Ascending aorta (tissue), 2 donors: ENCODE measurements at regions of chr17 and their contacts with region 1.

Region 1: GRCh38 chr17:61862975-61863800 is at the start of gene BRIP1:
- DNase-seq: peak; percentile 72 to 95
- H3K4me3 ChIP-seq: peak within 1 kb of the TSS; percentile 47 to 86
- H3K27ac ChIP-seq: peak within 1 kb of the TSS; percentile 72 to 82
- H3K4me1 ChIP-seq: no peaks in the 10 kb centered on the region
- H3K27me3 ChIP-seq: no peaks in the 10 kb centered on the region
- CTCF ChIP-seq: no peak
- total RNA-seq, gene BRIP1: not detected

Region 2: GRCh38 chr17:61799812-61800484 is 63.2 kb before region 1 on chr17:
- intact Hi-C with region 1: no loop called
- DNase-seq: no peak
- H3K4me3 ChIP-seq: no peak overlapping the region
- H3K27ac ChIP-seq: no peak overlapping the region
- H3K4me1 ChIP-seq: no peaks in the 10 kb centered on the region
- H3K27me3 ChIP-seq: no peaks in the 10 kb centered on the region
- CTCF ChIP-seq: no peak

Region 3: DNA sequence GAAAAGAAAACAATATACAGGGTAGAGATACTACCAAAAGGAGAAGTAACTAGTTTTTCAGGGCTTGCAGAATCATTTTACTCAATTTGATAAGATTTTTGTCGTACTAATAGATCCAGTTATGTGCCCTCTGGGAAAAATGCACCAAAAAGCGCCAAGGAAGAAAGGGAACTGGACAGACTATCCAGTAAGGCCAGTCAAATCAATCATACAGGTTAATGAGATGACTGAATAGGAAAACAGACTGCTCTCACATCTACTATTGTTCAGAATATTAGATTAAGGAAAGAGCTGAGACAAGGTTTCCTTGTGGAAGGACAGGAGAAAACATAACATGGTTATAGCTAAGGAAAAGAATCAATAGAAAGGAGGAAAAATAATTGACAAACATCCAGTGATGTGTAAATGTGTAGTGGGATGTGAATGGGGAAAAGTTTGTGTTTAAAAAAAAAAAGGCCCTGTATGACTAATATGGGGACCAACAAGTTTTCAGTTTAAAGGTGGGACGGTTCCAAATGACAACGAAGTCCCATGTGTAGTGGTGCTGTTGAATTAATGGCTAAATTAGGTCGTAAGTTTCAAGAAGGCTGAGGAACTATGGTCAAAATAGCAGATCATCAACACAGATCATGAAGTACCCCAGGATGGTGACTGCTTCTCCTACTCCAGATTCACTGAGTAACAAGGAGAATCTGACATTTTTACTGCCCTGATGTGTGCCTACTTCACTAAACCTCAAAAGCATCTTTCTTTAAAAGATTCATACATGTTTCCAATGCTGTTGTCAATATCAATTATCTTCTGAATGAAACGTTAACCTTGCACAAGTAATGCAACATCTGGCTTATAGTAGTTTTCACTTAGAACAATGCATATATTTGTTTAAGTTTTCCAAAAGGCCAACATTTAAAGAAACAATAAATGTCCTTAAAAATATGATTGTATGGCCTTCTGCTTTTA is 40.6 kb before region 1 on chr17:
- intact Hi-C with region 1: no loop called
- DNase-seq: no peak
- H3K4me3 ChIP-seq: no peak overlapping the region
- H3K27ac ChIP-seq: no peak overlapping the region
- H3K4me1 ChIP-seq: no peaks in the 10 kb centered on the region
- H3K27me3 ChIP-seq: no peaks in the 10 kb centered on the region
- CTCF ChIP-seq: no peak

Region 4: GRCh38 chr17:61916836-61917235 is 53.6 kb after region 1 on chr17:
- intact Hi-C with region 1: no loop called
- DNase-seq: no peak
- H3K4me3 ChIP-seq: no peak overlapping the region
- H3K27ac ChIP-seq: no peak overlapping the region
- H3K4me1 ChIP-seq: no peaks in the 10 kb centered on the region
- H3K27me3 ChIP-seq: no peaks in the 10 kb centered on the region
- CTCF ChIP-seq: no peak

Region 5: DNA sequence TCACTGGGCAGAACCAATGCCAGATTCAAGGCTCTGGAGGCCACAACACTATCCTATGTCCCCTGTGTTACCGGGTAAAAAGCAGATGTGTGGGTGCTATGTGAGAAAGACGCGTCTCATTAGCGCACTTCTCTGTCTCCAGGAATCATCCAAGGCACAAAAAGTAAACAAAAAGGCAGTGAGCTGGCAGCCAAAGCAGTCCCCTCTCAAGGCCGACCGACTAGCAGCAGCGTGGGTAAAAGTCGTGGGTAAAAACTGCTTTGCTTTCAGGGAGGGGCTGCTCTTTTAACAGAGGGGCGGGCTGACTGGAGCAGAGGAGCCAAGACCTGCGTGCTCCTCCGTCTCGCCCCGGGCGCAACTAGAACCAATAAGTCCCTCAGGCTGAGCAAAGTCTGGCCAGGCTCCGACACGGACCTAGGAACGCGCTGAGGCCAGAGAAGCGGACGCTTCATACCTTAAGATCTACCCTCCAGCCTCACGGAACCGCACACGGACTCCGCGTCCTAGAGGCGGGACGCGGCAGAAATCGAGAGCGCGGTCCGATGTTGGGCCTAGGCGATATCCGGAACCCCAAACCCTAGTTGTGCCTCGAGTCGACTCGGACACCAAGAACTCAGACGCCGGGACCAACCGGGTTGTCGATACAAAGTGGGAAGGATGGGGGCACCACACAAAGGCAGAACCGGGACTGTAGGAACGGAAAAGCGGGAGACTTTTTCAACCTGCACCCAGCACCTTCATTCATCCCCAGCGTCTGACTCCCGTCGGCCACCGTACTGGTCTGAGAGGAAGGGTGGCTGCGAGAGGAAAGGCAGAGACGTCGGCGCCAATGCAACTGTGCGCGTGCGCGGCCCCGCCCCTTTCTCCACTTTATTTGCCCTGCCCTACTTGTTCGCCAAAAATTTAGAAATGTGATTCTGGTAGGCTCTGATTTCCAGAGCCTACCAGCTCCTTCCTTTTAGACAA is 64.3 kb after region 1 on chr17 and contains the start of gene INTS2:
- intact Hi-C with region 1: loop called (anchors 1 kb)
- DNase-seq: peak; percentile 82 to 98
- H3K4me3 ChIP-seq: peak within 1 kb of the TSS; percentile 80 to 85
- H3K27ac ChIP-seq: peak within 1 kb of the TSS; percentile 90 to 93
- H3K4me1 ChIP-seq: peaks cover 0 to 9% of the 10 kb centered on the region in 2 donors
- H3K27me3 ChIP-seq: no peaks in the 10 kb centered on the region
- CTCF ChIP-seq: no peak
- total RNA-seq, gene INTS2: 2.2 TPM

Region 6: GRCh38 chr17:61942085-61942484 is 78.9 kb after region 1 on chr17:
- intact Hi-C with region 1: no loop called
- DNase-seq: no peak
- H3K4me3 ChIP-seq: no peak overlapping the region
- H3K27ac ChIP-seq: no peak overlapping the region
- H3K4me1 ChIP-seq: no peaks in the 10 kb centered on the region
- H3K27me3 ChIP-seq: no peaks in the 10 kb centered on the region
- CTCF ChIP-seq: no peak